Activated B cell treated with CpG ODN at 0.5 μM for 24 hours (primary cell): ENCODE measurements at regions of chr9 and their contacts with region 1.

Region 1: DNA sequence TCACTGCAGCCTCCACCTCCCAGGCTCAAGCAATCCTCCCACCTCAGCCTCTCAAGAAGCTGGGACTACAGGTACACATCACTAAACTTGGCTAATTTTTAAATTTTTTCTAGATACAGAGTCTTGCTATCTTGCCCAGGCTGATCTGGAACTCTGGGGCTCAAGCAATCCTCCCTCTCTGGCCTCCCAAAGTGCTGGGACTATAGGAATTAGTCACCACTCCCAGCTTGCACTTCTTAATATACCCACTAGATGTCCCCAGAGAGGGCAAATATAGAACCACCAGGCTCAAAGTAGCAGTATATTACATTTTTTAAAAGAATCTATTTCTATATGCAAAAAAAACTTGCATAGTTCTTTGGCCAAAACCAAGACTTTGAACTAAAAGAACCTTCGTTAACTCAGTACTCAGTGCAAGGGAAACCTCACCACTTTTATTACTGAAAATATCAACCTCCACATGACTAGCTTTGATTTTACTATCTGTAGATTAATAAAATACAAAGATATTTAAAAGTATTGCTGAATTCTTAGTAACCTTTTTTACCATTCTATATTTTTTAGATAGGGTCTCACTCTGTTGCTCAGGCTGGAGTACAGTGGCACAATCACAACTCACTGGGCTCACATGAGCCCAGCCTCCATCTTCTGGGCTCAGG is 25.8 kb upstream of the HSD17B3 start:
- DNase-seq: no peak
- ATAC-seq: peak; percentile 73
- H3K4me3 Mint-ChIP-seq: no peak overlapping the region
- H3K27ac Mint-ChIP-seq: no peak overlapping the region
- H3K4me1 Mint-ChIP-seq: no peaks in the 10 kb centered on the region
- H3K27me3 Mint-ChIP-seq: no peaks in the 10 kb centered on the region
- CTCF ChIP-seq: peak; percentile 88

Region 2: DNA sequence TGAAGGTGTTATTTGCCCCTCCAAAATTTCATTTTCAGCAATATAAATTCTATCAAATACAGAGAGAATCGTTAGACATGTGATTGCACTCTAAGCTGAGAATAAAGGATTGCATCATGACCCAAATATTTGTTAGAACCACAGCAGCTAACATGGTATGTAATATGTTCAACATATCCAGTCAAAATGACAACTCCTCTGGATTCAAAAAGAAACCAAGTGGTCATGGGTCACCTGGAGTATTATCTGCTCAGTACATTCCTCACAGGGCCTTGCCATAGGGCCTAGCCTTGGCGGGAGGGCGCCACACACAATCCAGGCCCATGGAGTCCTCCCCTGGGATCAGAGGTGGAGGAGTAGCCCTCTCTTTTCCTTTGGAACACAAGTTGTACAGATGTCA is 205.1 kb before region 1 on chr9:
- CTCF ChIA-PET with region 1: no interaction called
- POLR2A ChIA-PET with region 1: no interaction called
- intact Hi-C with region 1: no loop called
- DNase-seq: no peak
- ATAC-seq: no peak
- H3K4me3 Mint-ChIP-seq: no peak overlapping the region
- H3K27ac Mint-ChIP-seq: no peak overlapping the region
- H3K4me1 Mint-ChIP-seq: no peaks in the 10 kb centered on the region
- H3K27me3 Mint-ChIP-seq: peaks cover under 1% of the 10 kb centered on the region
- CTCF ChIP-seq: no peak

Region 3: DNA sequence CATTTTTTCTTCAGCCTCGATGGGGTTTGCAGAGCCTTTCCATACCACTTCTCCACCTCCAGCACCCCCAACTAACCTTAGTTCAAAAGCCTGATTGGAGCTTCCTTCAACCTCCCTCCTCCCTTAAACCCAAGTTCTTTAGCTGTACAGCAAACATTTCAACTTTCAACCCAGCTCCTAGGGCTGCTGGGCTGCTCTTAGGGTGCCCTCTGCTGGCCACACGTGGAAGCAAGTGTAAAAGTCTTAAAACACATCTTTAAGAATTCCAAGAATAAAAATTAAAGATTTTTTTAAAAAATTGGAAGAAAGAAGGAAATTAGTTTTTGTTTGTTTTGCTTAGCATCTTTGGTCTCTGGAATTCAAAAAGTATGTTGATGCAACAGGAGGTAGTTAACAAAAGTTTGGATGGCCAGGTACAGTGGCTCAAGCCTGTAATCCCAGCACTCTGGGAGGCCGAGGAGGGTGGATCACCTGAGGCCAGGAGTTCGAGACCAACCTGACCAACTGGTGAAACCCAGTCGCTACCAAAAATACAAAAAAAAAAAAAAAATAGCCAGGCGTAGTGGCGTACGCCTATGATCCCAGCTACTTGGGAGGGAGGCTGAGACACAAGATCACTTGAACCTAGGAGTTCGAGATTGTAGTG is 10.4 kb before region 1 on chr9:
- CTCF ChIA-PET with region 1: interaction called, 14 read pairs
- POLR2A ChIA-PET with region 1: no interaction called
- intact Hi-C with region 1: no loop called
- DNase-seq: peak; percentile 25
- ATAC-seq: no peak
- H3K4me3 Mint-ChIP-seq: no peak overlapping the region
- H3K27ac Mint-ChIP-seq: no peak overlapping the region
- H3K4me1 Mint-ChIP-seq: no peaks in the 10 kb centered on the region
- H3K27me3 Mint-ChIP-seq: peaks cover 4% of the 10 kb centered on the region
- CTCF ChIP-seq: peak; percentile 98

Region 4: DNA sequence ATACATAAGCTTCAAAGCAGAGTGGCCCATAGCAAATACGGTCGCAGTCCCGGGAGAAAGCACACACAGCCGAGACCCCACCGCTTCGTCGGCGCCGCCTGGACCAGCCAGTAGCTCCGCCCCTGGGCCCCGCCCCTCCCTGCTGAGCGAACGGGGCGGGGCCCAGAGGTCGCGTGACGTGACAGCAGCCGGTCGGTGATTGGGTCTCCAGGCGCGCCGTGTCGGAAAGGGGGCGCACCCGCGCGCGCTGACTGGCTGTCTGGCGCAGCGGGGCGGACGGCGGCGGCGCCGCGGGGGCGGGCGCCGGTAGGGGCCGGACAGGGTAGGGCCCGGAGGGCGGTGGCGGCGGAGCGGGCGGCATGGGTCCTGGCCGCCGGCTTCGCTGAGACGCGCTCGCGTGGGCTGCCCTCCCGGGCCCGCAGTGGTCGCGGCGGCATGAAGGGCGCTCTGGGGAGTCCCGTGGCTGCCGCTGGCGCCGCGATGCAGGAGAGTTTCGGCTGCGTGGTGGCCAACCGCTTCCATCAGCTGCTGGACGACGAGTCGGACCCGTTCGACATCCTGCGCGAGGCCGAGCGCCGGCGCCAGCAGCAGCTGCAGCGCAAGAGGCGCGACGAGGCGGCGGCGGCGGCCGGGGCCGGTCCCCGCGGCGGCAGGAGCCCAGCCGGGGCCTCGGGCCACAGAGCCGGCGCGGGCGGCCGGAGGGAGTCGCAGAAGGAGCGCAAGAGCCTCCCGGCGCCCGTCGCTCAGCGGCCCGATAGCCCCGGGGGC is 122.2 kb after region 1 on chr9 and contains the start of gene HABP4:
- CTCF ChIA-PET with region 1: interaction called, 5 read pairs
- POLR2A ChIA-PET with region 1: interaction called, 12 read pairs
- intact Hi-C with region 1: loop called (anchors 2 kb)
- DNase-seq: peak; percentile 97
- ATAC-seq: peak; percentile 96
- H3K4me3 Mint-ChIP-seq: peak within 1 kb of the TSS; percentile 87
- H3K27ac Mint-ChIP-seq: peak within 1 kb of the TSS; percentile 71
- H3K4me1 Mint-ChIP-seq: peaks cover 11% of the 10 kb centered on the region
- H3K27me3 Mint-ChIP-seq: peaks cover 3% of the 10 kb centered on the region
- CTCF ChIP-seq: no peak
- total RNA-seq, gene HABP4: 8.1 TPM in 2 replicates

Region 5: GRCh38 chr9:96566498-96567207 is 238.8 kb after region 1 on chr9:
- CTCF ChIA-PET with region 1: interaction called, 12 read pairs
- POLR2A ChIA-PET with region 1: interaction called, 5 read pairs
- intact Hi-C with region 1: loop called (anchors 1 kb)
- DNase-seq: peak; percentile 71
- ATAC-seq: peak; percentile 89
- H3K4me3 Mint-ChIP-seq: peak overlapping the region; percentile 86
- H3K27ac Mint-ChIP-seq: peak overlapping the region; percentile 81
- H3K4me1 Mint-ChIP-seq: peaks cover 17% of the 10 kb centered on the region
- H3K27me3 Mint-ChIP-seq: peaks cover 3% of the 10 kb centered on the region
- CTCF ChIP-seq: no peak

Region 6: GRCh38 chr9:96667361-96667728 is 339.5 kb after region 1 on chr9:
- CTCF ChIA-PET with region 1: interaction called, 25 read pairs
- POLR2A ChIA-PET with region 1: no interaction called
- intact Hi-C with region 1: loop called (anchors 1 kb)
- DNase-seq: no peak
- ATAC-seq: no peak
- H3K4me3 Mint-ChIP-seq: no peak overlapping the region
- H3K27ac Mint-ChIP-seq: no peak overlapping the region
- H3K4me1 Mint-ChIP-seq: no peaks in the 10 kb centered on the region
- H3K27me3 Mint-ChIP-seq: peaks cover 15% of the 10 kb centered on the region
- CTCF ChIP-seq: no peak